Activated CD4-positive, alpha-beta T cell treated with anti-CD3 and anti-CD28 coated beads, Interleukin-2, amount 10 ng/mL, durations not matched to agents 7 days and 5 days (primary cell): ENCODE measurements at regions of chr19 and their contacts with region 1.

Region 1: DNA sequence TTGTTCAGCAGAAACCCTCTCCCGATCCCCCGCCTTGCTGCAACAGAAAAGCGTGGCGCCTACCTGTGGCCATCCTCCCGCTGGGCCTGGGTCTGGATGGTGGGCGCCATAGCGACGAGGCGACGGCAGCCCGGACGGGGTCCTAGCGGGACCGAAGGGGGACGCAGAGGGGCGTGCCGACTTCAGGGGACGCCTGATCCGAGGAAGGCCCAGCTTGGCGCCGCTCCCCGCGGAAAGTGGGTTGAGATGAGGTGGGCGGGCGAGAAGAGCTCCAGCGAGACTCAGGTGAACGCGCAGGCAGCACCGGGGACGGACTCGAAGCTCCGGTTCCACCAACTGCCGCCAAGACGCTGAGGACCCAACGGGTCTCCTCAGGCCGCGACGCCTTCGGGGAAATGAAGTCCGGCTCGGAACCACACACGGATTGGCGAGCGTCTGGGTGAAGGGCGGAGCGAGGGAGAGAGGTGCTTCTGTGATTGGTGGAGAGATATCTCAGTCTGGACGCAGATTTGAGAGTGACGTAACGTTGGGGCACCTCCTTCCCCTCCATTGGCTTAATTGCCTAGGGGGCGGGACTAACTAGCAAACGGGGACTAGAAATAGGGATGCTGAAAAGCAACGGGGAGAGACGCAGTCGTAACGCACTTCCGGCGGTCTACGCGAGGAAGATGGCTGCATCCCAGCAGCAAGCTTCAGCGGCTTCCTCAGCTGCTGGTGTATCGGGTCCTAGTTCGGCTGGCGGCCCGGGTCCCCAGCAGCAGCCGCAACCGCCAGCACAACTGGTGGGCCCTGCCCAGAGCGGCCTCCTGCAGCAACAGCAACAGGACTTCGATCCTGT is at the starts of genes MED29 and PAF1:
- DNase-seq: peak; percentile 99
- H3K4me3 Mint-ChIP-seq: peak within 1 kb of the TSS; percentile 86
- H3K27ac Mint-ChIP-seq: peak within 1 kb of the TSS; percentile 99
- H3K4me1 Mint-ChIP-seq: peaks cover 48% of the 10 kb centered on the region
- H3K27me3 Mint-ChIP-seq: no peaks in the 10 kb centered on the region
- total RNA-seq, gene MED29: 34.9 to 40.1 TPM
- total RNA-seq, gene PAF1: 43.8 to 44.5 TPM

Region 2: DNA sequence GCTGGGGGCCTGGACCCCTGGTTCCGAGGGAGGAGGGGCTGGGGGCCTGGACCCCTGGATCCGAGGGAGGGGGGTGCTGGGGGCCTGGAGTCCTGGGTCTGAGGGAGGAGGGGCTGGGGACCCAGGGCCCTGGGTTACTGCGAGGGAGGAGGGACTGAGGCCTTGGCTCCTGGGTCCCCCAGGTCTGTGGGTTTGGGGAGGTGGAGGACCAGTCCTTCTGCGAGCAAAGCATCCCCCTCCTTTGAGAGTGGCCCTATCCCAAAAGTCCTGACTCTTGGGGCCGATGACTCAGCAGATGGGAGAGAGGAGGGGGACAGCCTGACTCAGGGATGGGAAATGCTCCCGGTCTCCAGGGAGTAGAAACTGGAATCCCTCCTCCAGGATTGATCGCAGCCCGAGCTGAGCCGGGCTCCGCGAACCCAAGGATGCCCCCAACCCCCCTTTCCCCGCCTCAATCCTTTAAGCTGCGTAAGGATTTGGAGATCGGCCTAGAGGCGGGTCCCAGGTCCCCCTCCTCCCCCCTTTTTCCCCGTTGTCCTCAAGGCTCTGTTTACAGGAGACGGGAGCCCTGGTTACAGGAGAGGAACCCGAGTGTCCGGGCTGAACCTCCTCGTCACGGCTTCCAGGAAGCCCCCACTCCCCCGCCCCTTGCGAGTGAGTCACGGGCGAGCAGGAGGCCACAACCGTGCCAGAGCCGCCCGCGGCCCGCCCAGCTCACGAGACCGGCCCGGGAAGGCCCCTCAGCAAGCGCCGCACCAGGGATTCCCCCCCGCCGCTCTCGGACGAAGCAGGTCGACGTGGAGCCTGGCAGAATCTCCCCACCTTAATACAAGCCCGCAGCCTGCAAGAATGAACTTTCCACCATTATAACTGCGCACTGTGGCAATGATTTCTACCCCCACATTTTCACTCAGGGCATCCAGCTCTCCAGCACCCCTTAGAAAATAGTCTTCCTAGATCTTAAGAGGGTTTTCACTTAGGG is 12.6 kb after region 1 on chr19:
- CTCF ChIA-PET with region 1: interaction called, 46 read pairs
- POLR2A ChIA-PET with region 1: no interaction called
- DNase-seq: peak; percentile 91
- H3K4me3 Mint-ChIP-seq: peak overlapping the region; percentile 76
- H3K27ac Mint-ChIP-seq: peak overlapping the region; percentile 96
- H3K4me1 Mint-ChIP-seq: peaks cover 67% of the 10 kb centered on the region
- H3K27me3 Mint-ChIP-seq: no peaks in the 10 kb centered on the region

Region 3: DNA sequence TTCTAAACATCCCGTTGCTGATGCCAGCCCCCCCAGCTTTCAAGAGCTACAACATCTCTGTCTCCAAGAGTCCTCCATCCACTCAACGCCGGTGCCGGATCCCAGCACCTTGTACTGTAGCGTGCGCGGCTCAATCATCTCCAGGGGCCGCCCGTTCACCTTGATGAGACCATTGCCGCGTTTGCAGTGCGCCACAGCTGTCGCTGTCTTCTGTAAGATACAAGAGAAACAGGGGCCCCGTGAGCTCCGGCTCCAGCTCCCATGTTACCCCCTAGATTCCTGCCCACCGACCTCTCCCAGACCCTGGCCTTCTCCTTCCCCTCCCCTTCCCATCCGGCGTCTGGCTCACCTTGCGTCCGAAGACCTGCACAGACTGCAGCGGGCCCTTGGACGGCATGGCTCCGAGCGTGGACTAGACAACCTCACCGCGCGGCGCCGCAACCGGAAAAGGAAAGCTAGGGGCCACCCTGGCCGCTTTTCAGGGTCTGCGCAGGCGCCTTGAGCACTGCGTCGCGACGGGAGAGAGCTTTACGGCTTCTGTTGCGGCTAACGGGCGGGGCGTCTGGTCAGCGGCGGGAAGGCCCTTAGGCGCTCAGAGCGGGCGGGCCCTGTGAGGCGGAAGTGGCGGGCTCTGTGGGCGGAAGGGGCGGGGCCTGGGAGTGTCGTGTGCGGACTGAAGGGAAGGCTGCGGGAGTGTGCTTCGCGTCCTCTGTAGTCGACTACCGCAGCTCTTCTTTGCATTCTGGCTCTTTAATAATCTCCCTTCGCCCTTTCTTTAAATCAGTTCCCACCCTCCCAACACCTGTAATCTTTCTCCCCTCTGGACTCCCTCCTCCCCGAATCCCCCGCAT is 44.8 kb after region 1 on chr19 and contains the start of gene RPS16:
- CTCF ChIA-PET with region 1: no interaction called
- POLR2A ChIA-PET with region 1: interaction called, 10 read pairs
- DNase-seq: peak; percentile 99
- H3K4me3 Mint-ChIP-seq: peak within 1 kb of the TSS; percentile 98
- H3K27ac Mint-ChIP-seq: peak within 1 kb of the TSS; percentile 97
- H3K4me1 Mint-ChIP-seq: peaks cover 55% of the 10 kb centered on the region
- H3K27me3 Mint-ChIP-seq: peaks cover 3% of the 10 kb centered on the region
- total RNA-seq, gene RPS16: 2,465 to 3,009 TPM

Region 4: DNA sequence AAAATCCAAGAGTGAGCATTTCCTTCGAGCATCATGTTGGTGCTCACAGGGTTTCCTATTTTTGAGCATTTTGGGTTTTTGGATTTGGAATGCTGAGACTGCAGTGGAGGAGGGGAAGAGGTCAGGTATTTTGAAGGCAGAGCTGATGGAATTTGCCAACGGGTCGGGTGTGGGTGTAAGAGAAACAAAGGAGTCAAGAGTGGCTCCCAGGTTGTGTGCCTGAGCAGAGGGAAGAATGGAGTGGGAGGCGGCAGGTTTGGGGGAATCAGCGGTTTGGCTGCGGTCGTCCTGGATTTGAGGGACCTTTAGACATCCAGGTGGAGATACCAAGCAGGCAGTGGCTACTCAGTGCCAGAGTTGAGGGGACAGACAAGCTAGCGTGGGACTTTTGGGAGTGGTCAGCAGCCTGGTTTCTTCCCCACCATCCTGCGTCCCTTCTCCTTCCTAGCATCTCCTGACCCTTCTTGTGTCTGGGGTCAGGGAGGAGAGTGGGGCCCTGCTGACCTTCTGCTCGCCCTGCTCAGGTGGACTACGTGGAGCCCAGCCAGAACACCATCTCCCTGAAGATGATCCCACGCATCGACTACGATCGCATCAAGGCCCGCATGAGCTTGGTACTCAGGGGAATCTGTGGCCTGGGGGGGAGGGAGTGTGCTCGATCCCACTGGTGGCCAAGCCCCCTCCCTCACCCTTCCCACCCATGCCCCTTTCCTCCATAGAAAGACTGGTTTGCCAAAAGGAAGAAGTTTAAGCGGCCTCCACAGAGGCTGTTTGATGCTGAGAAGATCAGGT is 75.2 kb after region 1 on chr19:
- CTCF ChIA-PET with region 1: no interaction called
- POLR2A ChIA-PET with region 1: no interaction called
- DNase-seq: no peak
- H3K4me3 Mint-ChIP-seq: no peak overlapping the region
- H3K27ac Mint-ChIP-seq: no peak overlapping the region
- H3K4me1 Mint-ChIP-seq: no peaks in the 10 kb centered on the region
- H3K27me3 Mint-ChIP-seq: no peaks in the 10 kb centered on the region

Region 5: DNA sequence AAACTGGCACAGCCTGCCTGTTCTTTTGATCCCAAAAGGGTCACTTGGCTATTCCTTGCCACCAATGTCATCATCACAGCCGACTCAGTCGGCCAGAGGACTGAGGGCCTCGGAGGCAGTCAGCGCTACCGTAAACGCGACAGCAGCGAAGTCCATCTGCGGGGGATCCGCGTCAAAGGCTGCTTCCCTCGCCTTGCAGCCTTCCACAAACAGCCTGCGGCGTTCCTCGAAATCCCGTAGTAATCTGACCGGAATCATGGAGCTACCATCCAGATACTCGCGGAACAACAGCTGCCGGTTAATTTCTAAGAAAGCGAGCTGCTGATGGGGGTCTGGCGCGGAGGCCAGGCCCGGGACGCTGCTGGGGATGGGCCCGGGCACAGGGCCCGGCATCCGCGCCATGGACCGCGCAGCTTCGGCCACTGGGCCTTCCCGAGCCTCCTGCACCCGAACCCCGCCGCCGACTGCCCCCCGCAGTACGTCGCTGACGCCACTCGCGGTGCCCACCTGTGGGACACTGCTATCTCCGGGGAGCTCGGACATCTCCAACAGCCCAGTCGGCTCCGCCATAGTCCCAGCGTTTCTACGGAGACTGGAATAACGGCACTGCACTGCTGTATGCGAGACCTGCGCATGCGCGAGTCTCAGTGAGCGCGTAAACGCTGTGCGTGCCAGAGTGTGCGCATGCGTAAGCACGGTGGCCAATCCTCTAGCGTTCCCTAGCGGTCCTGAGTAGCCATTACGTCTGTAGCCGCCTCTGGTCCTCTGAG is 141.4 kb after region 1 on chr19 and contains the start of gene EID2B:
- CTCF ChIA-PET with region 1: no interaction called
- POLR2A ChIA-PET with region 1: no interaction called
- DNase-seq: peak; percentile 96
- H3K4me3 Mint-ChIP-seq: peak within 1 kb of the TSS; percentile 90
- H3K27ac Mint-ChIP-seq: peak within 1 kb of the TSS; percentile 88
- H3K4me1 Mint-ChIP-seq: peaks cover 28% of the 10 kb centered on the region
- H3K27me3 Mint-ChIP-seq: no peaks in the 10 kb centered on the region
- total RNA-seq, gene EID2B: 3.4 to 5.1 TPM

Region 6: GRCh38 chr19:39704181-39705044 is 313.4 kb after region 1 on chr19 and contains the start of gene LGALS14:
- CTCF ChIA-PET with region 1: no interaction called
- POLR2A ChIA-PET with region 1: no interaction called
- DNase-seq: no peak
- H3K4me3 Mint-ChIP-seq: no peak within 1 kb of the TSS
- H3K27ac Mint-ChIP-seq: peak within 1 kb of the TSS; percentile 73
- H3K4me1 Mint-ChIP-seq: peaks cover 29% of the 10 kb centered on the region
- H3K27me3 Mint-ChIP-seq: peaks cover 17% of the 10 kb centered on the region
- total RNA-seq, gene LGALS14: not detected